ENCODE measurements at regions of chr13 and their contacts with region 1.

Region 1: GRCh38 chr13:48769107-48769704 is 115.5 kb downstream of the CYSLTR2 start:
- DNase-seq: peak; percentile 36 to 93
- H3K4me3 ChIP-seq: no peak overlapping the region
- H3K27ac ChIP-seq: no peak overlapping the region
- H3K4me1 ChIP-seq: no peaks in the 10 kb centered on the region
- H3K27me3 ChIP-seq: no peaks in the 10 kb centered on the region
- CTCF ChIP-seq: peak in 2 of 3 experiments; percentile 99 to 100; a peak in 3 of 4 replicates
- EP300 ChIP-seq: no peak
- POLR2A ChIP-seq: no peak
- RAD21 ChIP-seq: peak; percentile 100

Region 2: GRCh38 chr13:48334534-48335127 is 434.6 kb before region 1 on chr13:
- CTCF ChIA-PET with region 1: interaction called, 25 read pairs
- POLR2A ChIA-PET with region 1: no interaction called
- DNase-seq: no peak
- H3K4me3 ChIP-seq: no peak overlapping the region
- H3K27ac ChIP-seq: no peak overlapping the region
- H3K4me1 ChIP-seq: no peaks in the 10 kb centered on the region
- H3K27me3 ChIP-seq: no peaks in the 10 kb centered on the region
- CTCF ChIP-seq: peak in 2 of 3 experiments; percentile 33 to 44; a peak in 2 of 4 replicates
- EP300 ChIP-seq: no peak
- POLR2A ChIP-seq: no peak
- RAD21 ChIP-seq: peak in 1 of 2 experiments; percentile 67

Region 3: GRCh38 chr13:48580185-48580803 is 188.9 kb before region 1 on chr13:
- CTCF ChIA-PET with region 1: interaction called, 13 read pairs
- POLR2A ChIA-PET with region 1: no interaction called
- DNase-seq: peak in 1 of 2 experiments; percentile 83
- H3K4me3 ChIP-seq: no peak overlapping the region
- H3K27ac ChIP-seq: no peak overlapping the region
- H3K4me1 ChIP-seq: peaks cover 0 to 3% (median under 1%) of the 10 kb centered on the region in 4 experiments; a peak in 3 of 7 replicates
- H3K27me3 ChIP-seq: no peaks in the 10 kb centered on the region
- CTCF ChIP-seq: peak in 2 of 3 experiments; percentile 51 to 54; a peak in 3 of 4 replicates
- EP300 ChIP-seq: no peak
- POLR2A ChIP-seq: no peak
- RAD21 ChIP-seq: peak; percentile 72 to 78

Region 4: DNA sequence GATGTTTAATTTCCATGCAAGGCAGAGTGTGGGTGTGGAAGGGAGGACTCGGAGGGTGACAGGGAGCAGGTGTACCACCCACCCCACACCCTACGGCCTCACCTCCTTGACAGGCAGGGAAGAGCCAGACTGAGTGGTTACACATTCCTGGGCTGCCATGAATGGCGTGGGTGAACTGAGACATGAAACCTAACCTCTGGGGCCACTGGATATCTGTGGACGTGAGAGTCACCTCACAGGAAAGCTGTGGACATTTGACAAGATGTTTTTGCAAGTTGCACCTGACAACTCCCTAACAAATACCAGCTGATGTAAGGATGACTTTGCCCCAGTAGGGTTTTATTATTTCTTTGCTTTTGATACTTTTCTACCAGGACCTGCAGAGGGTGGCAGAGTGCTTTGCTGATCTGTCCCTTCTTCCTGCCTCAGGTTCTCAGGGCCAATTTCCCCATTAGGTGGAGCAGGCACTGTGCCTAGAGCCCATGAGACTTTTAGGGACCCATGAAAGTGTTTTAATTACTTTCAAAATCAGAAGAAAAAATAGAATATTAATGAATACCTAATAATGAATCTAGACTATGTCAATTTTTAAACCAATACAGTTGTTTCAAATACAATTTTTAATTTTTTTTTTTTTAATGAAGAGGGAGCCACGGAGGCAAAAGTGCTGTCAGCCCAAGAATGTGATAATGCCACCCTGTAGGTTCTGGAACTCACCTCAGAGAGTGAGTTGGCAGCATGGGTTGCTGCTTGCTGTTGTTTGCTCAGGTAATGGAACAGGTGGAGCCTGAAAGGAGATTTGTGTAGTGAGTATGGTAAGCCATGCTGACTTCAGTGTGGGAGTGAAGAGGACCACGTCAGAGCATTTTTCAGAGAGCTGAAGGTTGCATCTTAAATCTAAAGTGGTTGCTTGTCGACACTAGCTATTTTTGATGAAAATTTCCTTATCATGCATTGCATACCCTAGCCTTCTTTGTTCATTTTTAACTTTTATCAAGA is 173.5 kb before region 1 on chr13:
- CTCF ChIA-PET with region 1: interaction called, 68 read pairs
- POLR2A ChIA-PET with region 1: interaction called, 3 read pairs
- DNase-seq: peak in 1 of 2 experiments; percentile 50
- H3K4me3 ChIP-seq: no peak overlapping the region
- H3K27ac ChIP-seq: no peak overlapping the region
- H3K4me1 ChIP-seq: peaks cover 8 to 25% (median 18%) of the 10 kb centered on the region in 4 experiments
- H3K27me3 ChIP-seq: no peaks in the 10 kb centered on the region
- CTCF ChIP-seq: peak; percentile 31 to 95 (median 57)
- EP300 ChIP-seq: no peak
- POLR2A ChIP-seq: no peak
- RAD21 ChIP-seq: peak; percentile 89 to 91

Region 5: GRCh38 chr13:48660361-48661076 is 108.7 kb before region 1 on chr13:
- CTCF ChIA-PET with region 1: no interaction called
- POLR2A ChIA-PET with region 1: no interaction called
- DNase-seq: no peak
- H3K4me3 ChIP-seq: no peak overlapping the region
- H3K27ac ChIP-seq: no peak overlapping the region
- H3K4me1 ChIP-seq: no peaks in the 10 kb centered on the region
- H3K27me3 ChIP-seq: no peaks in the 10 kb centered on the region
- CTCF ChIP-seq: no peak
- EP300 ChIP-seq: no peak
- POLR2A ChIP-seq: no peak
- RAD21 ChIP-seq: no peak

Region 6: GRCh38 chr13:48731957-48732569 is 37.1 kb before region 1 on chr13:
- CTCF ChIA-PET with region 1: interaction called, 10 read pairs
- POLR2A ChIA-PET with region 1: no interaction called
- DNase-seq: peak; percentile 15 to 83
- H3K4me3 ChIP-seq: no peak overlapping the region
- H3K27ac ChIP-seq: no peak overlapping the region
- H3K4me1 ChIP-seq: peaks cover 0 to 5% (median 2%) of the 10 kb centered on the region in 4 experiments; a peak in 3 of 7 replicates
- H3K27me3 ChIP-seq: no peaks in the 10 kb centered on the region
- CTCF ChIP-seq: peak; percentile 88 to 97 (median 93)
- EP300 ChIP-seq: no peak
- POLR2A ChIP-seq: no peak
- RAD21 ChIP-seq: peak; percentile 74 to 87

Region 7: DNA sequence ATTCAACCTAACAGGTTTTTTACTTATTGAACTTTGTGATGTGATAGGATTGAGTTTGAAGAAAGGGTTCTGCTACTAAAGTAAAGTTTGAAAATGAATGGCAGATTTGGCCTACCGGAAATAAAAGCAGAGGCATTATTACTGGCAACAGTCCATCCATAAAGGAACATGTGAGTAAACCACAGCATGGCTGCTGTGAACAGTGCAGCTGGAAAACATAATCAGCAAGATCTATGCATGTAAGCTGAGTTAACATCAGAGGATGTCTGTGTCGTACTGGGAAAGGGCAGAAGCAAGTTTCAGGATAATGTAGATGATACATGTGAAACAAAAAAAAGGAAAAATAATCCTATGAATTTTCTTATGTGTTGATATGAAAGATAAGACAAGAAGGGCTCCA is 27.8 kb before region 1 on chr13:
- CTCF ChIA-PET with region 1: interaction called, 11 read pairs
- POLR2A ChIA-PET with region 1: no interaction called
- DNase-seq: no peak
- H3K4me3 ChIP-seq: no peak overlapping the region
- H3K27ac ChIP-seq: no peak overlapping the region
- H3K4me1 ChIP-seq: no peaks in the 10 kb centered on the region
- H3K27me3 ChIP-seq: no peaks in the 10 kb centered on the region
- CTCF ChIP-seq: no peak
- EP300 ChIP-seq: no peak
- POLR2A ChIP-seq: no peak
- RAD21 ChIP-seq: no peak

Region 8: GRCh38 chr13:48749699-48750473 is 19.3 kb before region 1 on chr13:
- CTCF ChIA-PET with region 1: interaction called, 28 read pairs
- POLR2A ChIA-PET with region 1: no interaction called
- DNase-seq: peak; percentile 46 to 76
- H3K4me3 ChIP-seq: no peak overlapping the region
- H3K27ac ChIP-seq: no peak overlapping the region
- H3K4me1 ChIP-seq: no peaks in the 10 kb centered on the region
- H3K27me3 ChIP-seq: no peaks in the 10 kb centered on the region
- CTCF ChIP-seq: peak; percentile 37 to 62 (median 61)
- EP300 ChIP-seq: no peak
- POLR2A ChIP-seq: no peak
- RAD21 ChIP-seq: peak; percentile 52 to 66; a peak in 3 of 4 replicates

Region 9: DNA sequence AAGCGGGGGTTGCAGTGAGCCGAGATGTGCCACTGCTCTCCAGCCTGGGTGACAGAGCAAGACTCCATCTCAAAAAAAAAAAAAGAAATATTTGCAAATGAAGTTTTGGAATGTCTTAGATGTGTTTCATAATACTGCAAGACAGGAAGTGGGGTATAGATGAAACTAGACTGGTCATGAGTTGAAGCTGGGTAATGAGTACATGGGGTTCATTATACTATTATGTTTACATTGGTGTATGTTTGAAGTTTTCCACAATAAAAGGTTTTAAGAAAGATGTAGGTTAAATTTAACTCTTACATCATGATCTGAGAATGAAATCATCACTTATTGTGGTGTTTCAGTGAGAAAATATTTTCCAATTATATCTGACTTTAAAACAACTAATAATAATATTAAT is 225.5 kb after region 1 on chr13:
- CTCF ChIA-PET with region 1: no interaction called
- POLR2A ChIA-PET with region 1: no interaction called
- DNase-seq: no peak
- H3K4me3 ChIP-seq: no peak overlapping the region
- H3K27ac ChIP-seq: no peak overlapping the region
- H3K4me1 ChIP-seq: no peaks in the 10 kb centered on the region
- H3K27me3 ChIP-seq: no peaks in the 10 kb centered on the region
- CTCF ChIP-seq: no peak
- EP300 ChIP-seq: no peak
- POLR2A ChIP-seq: no peak
- RAD21 ChIP-seq: no peak